ENCODE measurements at regions of chr13 and their contacts with region 1.

Region 1: GRCh38 chr13:49278211-49278610 is 30.5 kb downstream of the CDADC1 start:
- DNase-seq: no peak
- ATAC-seq: no peak
- H3K4me3 ChIP-seq: no peak overlapping the region
- H3K4me3 Mint-ChIP-seq: no peak overlapping the region
- H3K27ac ChIP-seq: no peak overlapping the region
- H3K27ac Mint-ChIP-seq: no peak overlapping the region
- H3K4me1 ChIP-seq: no peaks in the 10 kb centered on the region
- H3K4me1 Mint-ChIP-seq: no peaks in the 10 kb centered on the region
- H3K27me3 ChIP-seq: no peaks in the 10 kb centered on the region
- H3K27me3 Mint-ChIP-seq: no peaks in the 10 kb centered on the region

Region 2: DNA sequence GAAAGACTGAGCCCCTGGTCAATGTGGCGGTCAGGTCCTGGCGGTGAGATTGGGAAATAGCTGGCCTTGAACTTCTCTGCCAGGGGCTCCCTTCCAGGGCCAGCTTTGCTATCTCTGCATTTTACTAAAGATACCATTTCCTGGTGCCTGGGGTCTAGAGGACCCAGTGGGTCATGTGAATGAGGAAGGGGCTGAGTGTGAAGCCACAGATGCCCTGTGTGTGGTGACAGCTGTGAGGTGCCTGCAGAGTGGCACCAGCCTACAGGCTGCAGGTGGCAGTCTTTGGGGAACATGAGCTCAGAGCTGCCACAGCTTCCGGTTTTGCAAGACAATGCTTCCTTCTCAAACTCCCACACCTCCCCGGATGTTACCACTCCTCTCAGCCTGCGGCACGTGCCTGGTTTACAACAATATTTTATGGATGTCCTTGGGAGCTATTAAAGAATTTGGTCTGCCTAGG is 63.3 kb before region 1 on chr13:
- CTCF ChIA-PET with region 1: interaction called, 6 to 11 read pairs
- POLR2A ChIA-PET with region 1: no interaction called
- DNase-seq: peak in 33 of 35 experiments; percentile 17 to 63 (median 42)
- ATAC-seq: peak; percentile 74 to 88 (median 86)
- H3K4me3 ChIP-seq: no peak overlapping the region
- H3K4me3 Mint-ChIP-seq: no peak overlapping the region
- H3K27ac ChIP-seq: no peak overlapping the region
- H3K27ac Mint-ChIP-seq: peak overlapping the region; percentile 49 to 59
- H3K4me1 ChIP-seq: peaks cover 0 to 14% of the 10 kb centered on the region in 2 experiments
- H3K4me1 Mint-ChIP-seq: peaks cover 11 to 26% (median 19%) of the 10 kb centered on the region in 3 donors
- H3K27me3 ChIP-seq: peaks cover 0 to 32% of the 10 kb centered on the region in 2 experiments
- H3K27me3 Mint-ChIP-seq: peaks cover 29 to 34% of the 10 kb centered on the region in 2 donors

Region 3: GRCh38 chr13:49240017-49240416 is 38.2 kb before region 1 on chr13:
- CTCF ChIA-PET with region 1: interaction called, 18 to 24 read pairs
- POLR2A ChIA-PET with region 1: no interaction called
- DNase-seq: peak in 18 of 35 experiments; percentile 14 to 65 (median 28)
- ATAC-seq: peak; percentile 63 to 82 (median 73)
- H3K4me3 ChIP-seq: no peak overlapping the region
- H3K4me3 Mint-ChIP-seq: no peak overlapping the region
- H3K27ac ChIP-seq: no peak overlapping the region
- H3K27ac Mint-ChIP-seq: no peak overlapping the region
- H3K4me1 ChIP-seq: no peaks in the 10 kb centered on the region
- H3K4me1 Mint-ChIP-seq: peaks cover 0 to 2% (median 0%) of the 10 kb centered on the region in 3 donors
- H3K27me3 ChIP-seq: no peaks in the 10 kb centered on the region
- H3K27me3 Mint-ChIP-seq: no peaks in the 10 kb centered on the region

Region 4: GRCh38 chr13:49247643-49248621 is 30.3 kb before region 1 on chr13 and contains the start of gene CDADC1:
- CTCF ChIA-PET with region 1: interaction called, 8 to 10 read pairs
- POLR2A ChIA-PET with region 1: no interaction called
- DNase-seq: peak; percentile 63 to 90 (median 77)
- ATAC-seq: peak; percentile 75 to 82 (median 79)
- H3K4me3 ChIP-seq: peak within 1 kb of the TSS; percentile 78 to 100
- H3K4me3 Mint-ChIP-seq: peak within 1 kb of the TSS; percentile 97 to 99 (median 99)
- H3K27ac ChIP-seq: peak within 1 kb of the TSS; percentile 79
- H3K27ac Mint-ChIP-seq: peak within 1 kb of the TSS; percentile 96 to 98
- H3K4me1 ChIP-seq: peaks cover 6 to 14% of the 10 kb centered on the region in 2 experiments
- H3K4me1 Mint-ChIP-seq: peaks cover 48 to 54% (median 50%) of the 10 kb centered on the region in 3 donors
- H3K27me3 ChIP-seq: no peaks in the 10 kb centered on the region
- H3K27me3 Mint-ChIP-seq: no peaks in the 10 kb centered on the region
- total RNA-seq, gene CDADC1: 8.6 to 16.1 (median 12.5) TPM

Region 5: DNA sequence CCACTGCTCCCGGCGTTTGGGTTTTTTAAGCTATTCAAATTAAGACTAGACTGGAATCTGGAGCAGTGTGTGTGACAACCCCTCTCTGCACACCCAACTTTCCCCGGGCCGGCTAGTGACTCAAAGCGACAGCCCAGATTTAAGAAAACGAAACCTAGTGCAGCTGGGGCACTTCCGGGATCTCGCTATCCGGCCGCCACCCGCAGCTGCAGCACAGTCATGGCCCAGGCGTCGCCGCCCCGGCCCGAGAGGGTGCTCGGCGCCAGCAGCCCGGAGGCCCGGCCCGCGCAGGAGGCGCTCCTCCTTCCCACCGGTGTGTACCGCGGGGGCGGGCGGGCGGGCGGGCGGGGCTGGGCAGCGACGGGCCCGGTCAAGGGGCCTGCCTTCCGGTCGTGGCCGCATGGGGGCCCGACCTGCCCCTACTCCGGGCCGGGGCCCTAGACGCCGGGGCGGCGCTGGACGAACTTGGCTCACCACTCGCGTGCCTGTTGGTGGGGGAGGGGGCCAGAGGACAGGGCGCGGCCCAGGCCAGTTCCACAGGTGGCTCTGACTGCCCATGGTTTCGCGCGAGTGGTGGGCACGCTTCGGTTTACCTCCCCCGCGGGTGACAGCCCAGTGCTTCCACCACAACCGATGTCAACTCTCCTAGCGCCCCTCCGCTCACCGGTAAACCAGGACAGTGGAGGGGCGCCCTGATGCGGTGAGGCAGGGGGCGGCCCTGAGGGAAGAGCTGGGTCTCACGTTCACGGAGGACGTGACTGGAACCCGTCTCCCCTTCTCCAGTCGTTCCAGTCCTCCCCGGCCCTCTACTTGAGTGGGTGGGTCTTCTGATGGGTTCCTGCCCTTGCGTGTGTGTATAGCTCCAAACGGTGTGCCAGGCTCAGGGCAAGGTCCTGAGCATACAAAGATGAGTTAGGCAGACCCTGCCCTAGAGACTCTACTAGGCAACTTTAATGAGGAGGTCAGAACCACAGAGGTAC is 217.9 kb after region 1 on chr13 and contains the start of gene PHF11:
- CTCF ChIA-PET with region 1: no interaction called
- POLR2A ChIA-PET with region 1: no interaction called
- DNase-seq: peak; percentile 66 to 92 (median 83)
- ATAC-seq: peak; percentile 84 to 89 (median 87)
- H3K4me3 ChIP-seq: peak within 1 kb of the TSS; percentile 79 to 95
- H3K4me3 Mint-ChIP-seq: peak within 1 kb of the TSS; percentile 95 to 98 (median 98)
- H3K27ac ChIP-seq: peak within 1 kb of the TSS; percentile 95
- H3K27ac Mint-ChIP-seq: peak within 1 kb of the TSS; percentile 100
- H3K4me1 ChIP-seq: peaks cover 6 to 38% of the 10 kb centered on the region in 2 experiments
- H3K4me1 Mint-ChIP-seq: peaks cover 53 to 57% (median 56%) of the 10 kb centered on the region in 3 donors
- H3K27me3 ChIP-seq: no peaks in the 10 kb centered on the region
- H3K27me3 Mint-ChIP-seq: no peaks in the 10 kb centered on the region
- total RNA-seq, gene PHF11: 94.0 to 119 (median 113) TPM